ENCODE measurements at regions of chr11 and their contacts with region 1.

Region 1: DNA sequence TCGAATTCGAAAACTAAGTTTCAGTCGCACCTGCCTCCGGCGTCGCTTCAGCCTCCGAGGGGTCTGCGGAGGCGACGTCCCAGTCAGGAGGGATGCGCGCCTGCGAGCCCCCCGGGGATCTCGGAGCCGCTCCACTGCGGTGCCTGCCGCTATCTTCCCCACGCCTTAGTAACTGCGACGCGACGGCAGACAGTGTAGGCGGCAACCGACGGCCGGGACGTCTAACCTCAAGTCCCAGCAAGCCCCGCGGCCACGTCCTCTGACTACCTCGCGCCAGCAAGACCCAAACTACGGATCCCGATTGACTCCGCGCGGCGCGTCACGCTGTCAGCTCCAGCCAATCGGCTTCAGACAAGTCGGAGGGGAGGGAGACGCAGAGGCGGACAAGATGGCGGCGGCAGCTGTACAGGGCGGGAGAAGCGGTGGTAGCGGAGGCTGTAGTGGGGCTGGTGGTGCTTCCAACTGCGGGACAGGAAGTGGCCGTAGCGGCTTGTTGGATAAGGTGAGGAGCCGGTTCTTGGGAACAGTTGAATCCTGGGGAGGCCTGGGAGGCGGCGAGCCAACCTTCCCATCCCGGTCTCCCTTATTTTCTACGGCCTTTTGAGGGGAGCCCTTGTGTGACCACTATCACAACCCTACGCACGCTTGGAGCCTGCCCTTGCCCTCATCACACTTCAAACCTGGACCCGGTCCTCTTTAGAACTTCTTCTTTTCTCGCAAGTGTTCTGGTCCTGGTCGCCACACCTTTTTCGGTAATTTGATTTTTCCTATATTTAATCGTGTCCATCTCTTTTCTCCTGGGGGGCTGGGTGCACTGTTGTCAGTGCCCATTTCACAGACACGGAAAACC is at the starts of genes SPCS2 and XRRA1:
- DNase-seq: peak; percentile 98
- H3K4me3 Mint-ChIP-seq: peak within 1 kb of the TSS; percentile 96
- H3K27ac Mint-ChIP-seq: peak within 1 kb of the TSS; percentile 93
- H3K4me1 Mint-ChIP-seq: peaks cover 35% of the 10 kb centered on the region
- H3K27me3 Mint-ChIP-seq: no peaks in the 10 kb centered on the region
- CTCF ChIP-seq: no peak
- total RNA-seq, gene SPCS2: 198 and 217 TPM in 2 replicates
- total RNA-seq, gene XRRA1: 49.3 and 49.6 TPM in 2 replicates

Region 2: DNA sequence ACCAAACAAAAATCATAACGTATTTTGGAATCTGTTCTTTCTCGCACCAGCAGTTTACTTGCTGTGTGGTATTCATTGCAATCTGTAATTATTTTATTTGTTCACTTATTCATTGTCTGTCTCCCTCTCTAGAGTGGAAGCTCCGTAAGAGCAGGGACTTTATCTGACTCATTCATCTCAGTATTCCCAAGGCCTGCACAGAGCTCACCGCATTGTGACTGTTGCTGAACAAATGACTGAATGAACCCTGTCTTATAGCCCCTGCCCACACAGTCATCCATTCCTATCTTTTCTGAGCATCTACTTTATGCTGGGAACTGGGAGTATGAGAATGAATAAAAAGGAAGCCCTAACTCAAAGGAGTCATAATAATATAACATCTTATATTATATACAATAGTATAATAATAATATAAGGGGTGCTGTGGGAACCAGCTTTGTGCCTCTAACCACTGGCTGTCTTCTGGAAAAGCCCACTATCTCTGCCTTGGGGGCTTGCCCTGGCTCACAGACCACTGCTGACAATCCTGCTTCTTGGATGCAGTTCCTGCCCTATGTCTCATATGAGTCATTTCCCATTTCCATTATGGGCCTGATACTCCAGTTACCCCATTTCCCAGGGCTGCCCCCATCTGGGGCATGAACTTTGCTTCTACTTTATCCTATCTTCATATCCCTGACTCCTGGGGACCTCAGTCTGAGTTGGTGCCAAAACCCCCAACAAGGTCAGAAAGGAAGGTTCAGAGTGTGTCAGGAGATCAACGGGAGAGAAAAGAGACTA is 11.2 kb before region 1 on chr11:
- CTCF ChIA-PET with region 1: no interaction called
- POLR2A ChIA-PET with region 1: interaction called, 23 read pairs
- intact Hi-C with region 1: no loop called
- DNase-seq: no peak
- H3K4me3 Mint-ChIP-seq: no peak overlapping the region
- H3K27ac Mint-ChIP-seq: peak overlapping the region; percentile 20
- H3K4me1 Mint-ChIP-seq: peaks cover 18% of the 10 kb centered on the region
- H3K27me3 Mint-ChIP-seq: no peaks in the 10 kb centered on the region
- CTCF ChIP-seq: no peak

Region 3: GRCh38 chr11:74966651-74967050 is 17.5 kb after region 1 on chr11:
- CTCF ChIA-PET with region 1: interaction called, 3 read pairs
- POLR2A ChIA-PET with region 1: interaction called, 12 read pairs
- intact Hi-C with region 1: no loop called
- DNase-seq: peak; percentile 61
- H3K4me3 Mint-ChIP-seq: no peak overlapping the region
- H3K27ac Mint-ChIP-seq: peak overlapping the region; percentile 73
- H3K4me1 Mint-ChIP-seq: peaks cover 18% of the 10 kb centered on the region
- H3K27me3 Mint-ChIP-seq: no peaks in the 10 kb centered on the region
- CTCF ChIP-seq: no peak

Region 4: DNA sequence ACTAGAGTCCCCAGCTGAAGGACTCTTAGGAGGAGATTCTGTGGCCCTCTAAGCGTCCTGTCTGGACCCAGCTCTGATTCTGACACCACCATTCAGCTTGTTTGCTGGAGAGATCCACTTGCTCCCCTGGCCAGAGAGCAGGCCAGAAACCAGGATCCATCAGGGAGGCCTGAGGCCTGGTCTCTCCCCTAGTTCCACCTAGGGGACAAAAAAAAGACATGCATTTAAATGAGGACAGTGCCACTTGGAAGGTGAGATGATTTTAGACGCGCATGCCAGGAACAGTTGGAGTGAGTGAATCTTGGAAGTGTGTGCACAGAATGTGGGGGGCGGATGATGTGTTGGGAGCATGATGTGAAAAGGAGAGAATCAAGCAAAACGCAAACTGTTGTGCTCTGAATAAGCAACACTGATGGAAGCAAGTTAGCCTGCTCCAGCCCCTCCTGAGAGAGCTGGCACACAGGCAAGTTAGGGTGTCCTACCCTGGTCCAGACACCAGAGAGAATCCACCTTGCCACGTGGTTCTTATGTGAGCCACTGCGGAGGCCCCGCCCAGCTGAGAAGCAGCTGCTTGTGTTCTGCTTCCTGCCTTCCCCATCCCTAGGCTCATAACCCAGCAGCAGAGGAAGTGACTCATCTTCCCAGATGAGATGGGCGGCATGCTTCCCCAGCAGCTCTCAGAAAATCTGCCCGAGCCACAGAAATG is 193.7 kb after region 1 on chr11:
- CTCF ChIA-PET with region 1: no interaction called
- POLR2A ChIA-PET with region 1: no interaction called
- intact Hi-C with region 1: no loop called
- DNase-seq: peak; percentile 90
- H3K4me3 Mint-ChIP-seq: no peak overlapping the region
- H3K27ac Mint-ChIP-seq: peak overlapping the region; percentile 53
- H3K4me1 Mint-ChIP-seq: peaks cover 16% of the 10 kb centered on the region
- H3K27me3 Mint-ChIP-seq: peaks cover 16% of the 10 kb centered on the region
- CTCF ChIP-seq: no peak